ENCODE measurements at regions of chr4 and their contacts with region 1.

Region 1: DNA sequence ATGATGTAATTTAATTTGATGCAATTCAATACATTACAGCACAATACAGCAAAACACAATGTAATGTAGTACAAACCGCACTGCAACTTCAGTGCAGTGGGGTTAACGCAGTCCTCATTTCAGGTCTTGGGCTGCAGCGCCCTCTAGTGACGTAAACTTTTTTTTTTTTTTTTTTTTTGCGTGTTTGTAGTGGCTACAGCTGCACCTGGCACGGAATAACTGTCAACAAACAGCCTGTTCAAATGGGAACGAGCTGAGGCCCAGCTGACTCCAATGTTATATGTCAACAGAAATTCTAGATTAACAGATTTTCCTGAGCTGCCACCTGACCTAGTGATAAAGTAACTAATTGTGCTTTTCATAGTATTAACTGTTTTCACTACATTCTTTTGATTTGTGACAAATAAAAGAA is 33.5 kb upstream of the RASSF6 start:
- DNase-seq: no peak
- ATAC-seq: peak in 2 of 4 donors; percentile 21 to 67
- H3K4me3 ChIP-seq: no peak overlapping the region
- H3K27ac ChIP-seq: no peak overlapping the region
- H3K4me1 ChIP-seq: no peaks in the 10 kb centered on the region
- H3K27me3 ChIP-seq: no peaks in the 10 kb centered on the region
- CTCF ChIP-seq: peak; percentile 58

Region 2: DNA sequence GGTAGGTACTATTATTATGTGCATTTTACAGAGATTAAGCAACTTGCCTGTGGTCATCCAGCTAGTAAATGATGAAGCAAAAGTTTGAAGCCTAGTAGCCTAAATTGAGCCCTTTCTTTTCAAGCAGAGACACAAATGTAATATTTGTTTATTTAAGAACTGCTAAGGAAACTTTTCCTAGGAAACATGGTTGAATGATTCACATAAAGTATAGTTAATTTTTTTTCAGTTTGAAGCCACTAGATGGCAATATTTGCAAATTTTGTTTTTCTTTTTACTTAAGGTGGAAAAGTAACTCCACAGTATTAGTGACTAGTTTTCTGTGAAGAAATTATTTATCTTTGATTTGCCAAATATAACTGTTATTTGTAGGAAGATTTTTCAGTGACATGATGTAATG is 342.3 kb before region 1 on chr4:
- intact Hi-C with region 1: loop called (anchors 5 to 10 kb)
- DNase-seq: no peak
- ATAC-seq: no peak
- H3K4me3 ChIP-seq: no peak overlapping the region
- H3K27ac ChIP-seq: no peak overlapping the region
- H3K4me1 ChIP-seq: no peaks in the 10 kb centered on the region
- H3K27me3 ChIP-seq: no peaks in the 10 kb centered on the region
- CTCF ChIP-seq: peak; percentile 27

Region 3: GRCh38 chr4:73341454-73341853 is 312.2 kb before region 1 on chr4:
- intact Hi-C with region 1: loop called in 1 of 2 experiments (anchors 5 kb)
- DNase-seq: no peak
- ATAC-seq: no peak
- H3K4me3 ChIP-seq: no peak overlapping the region
- H3K27ac ChIP-seq: no peak overlapping the region
- H3K4me1 ChIP-seq: no peaks in the 10 kb centered on the region
- H3K27me3 ChIP-seq: no peaks in the 10 kb centered on the region
- CTCF ChIP-seq: peak; percentile 43

Region 4: DNA sequence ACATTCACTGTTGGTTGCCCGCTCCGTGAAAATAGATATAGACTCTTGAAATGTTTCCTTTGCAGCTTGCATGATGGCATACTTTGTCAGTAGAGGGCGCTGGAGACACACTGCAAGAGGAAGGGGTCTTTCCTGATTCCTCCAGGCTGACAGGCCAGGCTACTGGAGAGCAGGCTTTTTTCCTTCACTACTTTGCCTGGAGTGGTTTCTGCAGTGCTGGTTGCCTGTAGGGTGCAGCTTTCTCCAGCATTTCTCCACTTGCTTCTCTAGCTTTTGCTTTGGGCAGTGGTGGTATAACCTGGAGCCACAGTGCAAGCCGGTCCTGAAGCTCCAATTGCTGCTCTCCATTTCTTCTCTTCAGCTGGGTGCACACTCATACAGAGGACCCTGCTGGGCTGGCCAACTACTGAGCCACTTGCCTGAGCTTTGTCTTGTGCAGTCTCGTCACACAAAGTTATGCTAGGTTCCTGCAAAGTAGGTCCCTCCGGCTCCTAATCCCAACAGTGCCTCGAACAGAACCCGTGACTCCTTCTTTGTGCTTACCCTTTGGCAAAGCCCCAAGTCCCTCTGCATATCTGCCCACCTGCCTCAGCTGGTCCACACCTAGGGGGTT is 79.8 kb before region 1 on chr4:
- intact Hi-C with region 1: loop called in 1 of 2 experiments (anchors 5 kb)
- DNase-seq: peak; percentile 20 to 44
- ATAC-seq: no peak
- H3K4me3 ChIP-seq: no peak overlapping the region
- H3K27ac ChIP-seq: no peak overlapping the region
- H3K4me1 ChIP-seq: no peaks in the 10 kb centered on the region
- H3K27me3 ChIP-seq: no peaks in the 10 kb centered on the region
- CTCF ChIP-seq: peak; percentile 43